ENCODE measurements at regions of chr10 and their contacts with region 1.

Region 1: GRCh38 chr10:71708301-71708703 is 11.3 kb downstream of the C10orf105 start:
- DNase-seq: peak in 1 of 2 donors; percentile 50
- H3K4me3 ChIP-seq: no peak overlapping the region
- H3K27ac ChIP-seq: no peak overlapping the region
- H3K4me1 ChIP-seq: peaks cover 0 to 9% of the 10 kb centered on the region in 2 donors
- H3K27me3 ChIP-seq: no peaks in the 10 kb centered on the region
- CTCF ChIP-seq: peak; percentile 60 to 81 (median 74)
- POLR2A ChIP-seq: no peak

Region 2: GRCh38 chr10:71319042-71319799 is 389.1 kb before region 1 on chr10 and contains the start of gene SLC29A3:
- intact Hi-C with region 1: no loop called
- DNase-seq: peak; percentile 80 to 83
- H3K4me3 ChIP-seq: peak within 1 kb of the TSS; percentile 74 to 80
- H3K27ac ChIP-seq: peak within 1 kb of the TSS; percentile 88 to 92
- H3K4me1 ChIP-seq: no peaks in the 10 kb centered on the region
- H3K27me3 ChIP-seq: no peaks in the 10 kb centered on the region
- CTCF ChIP-seq: peak; percentile 64 to 72 (median 70)
- POLR2A ChIP-seq: peak; percentile 63 to 85
- total RNA-seq, gene SLC29A3: 1.0 to 13.8 (median 5.5) TPM

Region 3: DNA sequence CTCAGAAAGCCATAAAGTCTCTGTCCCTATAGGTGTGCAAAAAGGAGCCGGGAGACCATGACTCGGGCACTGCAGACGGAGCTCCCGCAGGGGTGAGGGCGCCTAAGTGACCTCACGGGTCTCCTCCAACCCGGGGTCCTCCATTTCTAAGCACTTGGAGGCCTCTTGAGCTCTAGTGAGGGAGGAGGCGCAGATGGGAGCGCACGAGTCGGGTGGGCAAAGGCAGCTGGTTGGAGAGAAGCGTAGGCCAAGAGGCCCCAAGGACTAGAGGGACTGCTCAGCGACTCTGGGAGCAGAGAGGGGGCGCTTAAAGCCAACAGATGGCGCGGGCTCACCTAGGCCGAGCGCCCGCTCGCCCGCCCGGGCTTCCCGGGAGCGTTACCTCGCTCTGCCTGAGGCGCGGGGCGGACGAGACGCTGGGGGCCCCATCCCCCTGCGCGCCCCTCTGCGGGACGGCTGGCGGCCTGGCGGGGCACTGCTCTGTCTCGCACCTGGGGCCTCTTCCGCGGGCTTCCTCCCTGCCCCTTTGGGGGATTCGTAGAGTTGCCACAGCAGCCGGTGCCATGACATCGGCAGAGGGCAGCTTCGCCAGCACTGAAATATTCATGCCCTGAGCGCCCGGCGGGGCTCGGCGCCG is 312.1 kb before region 1 on chr10:
- intact Hi-C with region 1: loop called (anchors 10 kb)
- DNase-seq: peak; percentile 64 to 74
- H3K4me3 ChIP-seq: peak overlapping the region; percentile 37 to 66
- H3K27ac ChIP-seq: peak overlapping the region; percentile 75 to 91
- H3K4me1 ChIP-seq: peaks cover 0 to 8% of the 10 kb centered on the region in 2 donors
- H3K27me3 ChIP-seq: peaks cover 0 to 3% of the 10 kb centered on the region in 2 donors
- CTCF ChIP-seq: peak; percentile 65 to 81 (median 72)
- POLR2A ChIP-seq: no peak

Region 4: DNA sequence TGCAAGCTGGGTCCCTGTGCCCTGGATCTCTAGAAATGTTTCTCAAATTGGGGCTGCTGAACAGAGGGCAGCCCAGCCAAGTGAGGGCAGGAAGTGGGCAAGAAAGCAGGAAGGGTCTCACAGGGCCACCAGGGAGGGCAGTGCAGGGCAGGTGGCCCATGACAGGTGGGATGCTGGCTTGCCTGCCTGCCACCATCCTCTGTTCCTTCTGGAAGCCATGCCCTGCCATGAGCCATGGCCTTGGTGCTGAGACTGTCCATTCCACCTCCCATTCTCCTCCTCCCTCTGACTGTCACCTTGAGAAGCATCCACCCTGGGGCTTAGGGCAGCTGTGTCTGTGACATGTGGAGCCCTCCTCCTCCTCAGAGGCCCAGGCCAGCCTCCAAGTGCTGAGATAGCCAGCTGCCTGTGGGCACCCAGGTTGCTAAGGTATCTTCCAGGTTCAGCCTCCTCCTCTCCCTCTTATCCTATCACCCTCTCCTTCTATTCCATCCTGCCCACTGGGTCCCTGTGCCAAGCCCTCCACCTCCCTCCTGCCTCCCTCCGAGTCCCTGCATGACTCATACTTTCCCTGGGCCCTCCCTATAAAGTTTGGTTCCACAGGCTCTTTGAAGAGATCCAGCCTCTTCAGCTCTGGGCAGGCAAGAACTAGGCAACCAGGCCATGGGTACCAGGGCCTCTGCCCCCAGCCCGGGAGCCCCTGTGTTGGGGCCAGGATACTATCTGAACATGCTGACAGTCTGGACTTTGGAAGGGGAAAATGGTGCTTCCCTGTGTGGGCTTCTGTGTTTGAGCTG is 63.7 kb after region 1 on chr10:
- intact Hi-C with region 1: loop called (anchors 5 kb)
- DNase-seq: peak; percentile 84 to 92
- H3K4me3 ChIP-seq: peak overlapping the region; percentile 66 to 81
- H3K27ac ChIP-seq: peak overlapping the region; percentile 94 to 97
- H3K4me1 ChIP-seq: peaks cover 21 to 34% of the 10 kb centered on the region in 2 donors
- H3K27me3 ChIP-seq: no peaks in the 10 kb centered on the region
- CTCF ChIP-seq: no peak
- POLR2A ChIP-seq: peak; percentile 61 to 64

Region 5: GRCh38 chr10:71812016-71812912 is 104.0 kb after region 1 on chr10:
- intact Hi-C with region 1: no loop called
- DNase-seq: peak; percentile 53 to 66
- H3K4me3 ChIP-seq: no peak overlapping the region
- H3K27ac ChIP-seq: no peak overlapping the region
- H3K4me1 ChIP-seq: no peaks in the 10 kb centered on the region
- H3K27me3 ChIP-seq: no peaks in the 10 kb centered on the region
- CTCF ChIP-seq: peak; percentile 68 to 84 (median 82)
- POLR2A ChIP-seq: no peak

Region 6: DNA sequence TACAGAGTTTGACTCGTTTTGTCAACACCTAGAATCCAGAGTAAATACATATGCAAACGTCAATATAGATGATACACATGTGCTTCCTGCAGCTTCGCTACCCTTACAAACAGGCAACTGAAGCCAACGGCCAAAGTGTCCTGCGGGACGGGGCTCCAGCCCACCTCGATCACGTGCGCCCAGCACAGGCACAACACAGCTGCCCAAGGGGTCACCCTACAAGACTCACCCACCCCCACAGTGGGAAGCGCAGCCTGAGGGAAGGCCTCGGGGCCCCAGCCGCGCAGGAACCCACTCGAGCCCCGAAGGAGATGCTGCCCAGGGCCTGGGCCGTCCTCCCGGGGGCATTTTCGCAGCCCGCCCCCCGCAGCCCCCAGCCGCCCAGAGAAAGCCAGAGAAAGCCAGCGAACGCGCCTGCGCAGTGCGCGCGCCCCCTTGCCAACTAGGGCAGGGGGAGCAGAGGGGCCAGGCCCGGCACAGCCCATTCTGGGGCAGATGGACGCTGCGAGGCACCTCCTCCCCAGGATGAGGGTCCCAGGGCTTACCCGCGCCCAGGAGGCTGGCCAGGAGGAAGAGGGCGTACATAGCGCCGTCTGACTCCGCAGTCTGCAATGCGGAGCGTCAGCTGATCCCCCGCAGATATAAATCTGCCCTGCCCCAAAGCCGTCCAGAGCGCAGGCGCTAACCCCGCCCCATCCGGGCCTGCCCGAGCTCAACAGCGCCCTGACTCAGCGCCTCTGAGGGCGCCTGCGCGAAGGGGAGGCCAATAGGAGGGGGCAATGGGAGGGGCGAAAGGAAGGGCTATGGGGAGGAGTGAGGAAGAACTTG is 142.5 kb after region 1 on chr10 and contains the start of gene PSAP:
- intact Hi-C with region 1: no loop called
- DNase-seq: peak; percentile 99
- H3K4me3 ChIP-seq: peak within 1 kb of the TSS; percentile 65 to 88
- H3K27ac ChIP-seq: peak within 1 kb of the TSS; percentile 92 to 100
- H3K4me1 ChIP-seq: peaks cover 0 to 5% of the 10 kb centered on the region in 2 donors
- H3K27me3 ChIP-seq: no peaks in the 10 kb centered on the region
- CTCF ChIP-seq: peak in 2 of 4 experiments; percentile 6 to 15
- POLR2A ChIP-seq: peak; percentile 97 to 99
- total RNA-seq, gene PSAP: 603 to 903 (median 759) TPM

Region 7: DNA sequence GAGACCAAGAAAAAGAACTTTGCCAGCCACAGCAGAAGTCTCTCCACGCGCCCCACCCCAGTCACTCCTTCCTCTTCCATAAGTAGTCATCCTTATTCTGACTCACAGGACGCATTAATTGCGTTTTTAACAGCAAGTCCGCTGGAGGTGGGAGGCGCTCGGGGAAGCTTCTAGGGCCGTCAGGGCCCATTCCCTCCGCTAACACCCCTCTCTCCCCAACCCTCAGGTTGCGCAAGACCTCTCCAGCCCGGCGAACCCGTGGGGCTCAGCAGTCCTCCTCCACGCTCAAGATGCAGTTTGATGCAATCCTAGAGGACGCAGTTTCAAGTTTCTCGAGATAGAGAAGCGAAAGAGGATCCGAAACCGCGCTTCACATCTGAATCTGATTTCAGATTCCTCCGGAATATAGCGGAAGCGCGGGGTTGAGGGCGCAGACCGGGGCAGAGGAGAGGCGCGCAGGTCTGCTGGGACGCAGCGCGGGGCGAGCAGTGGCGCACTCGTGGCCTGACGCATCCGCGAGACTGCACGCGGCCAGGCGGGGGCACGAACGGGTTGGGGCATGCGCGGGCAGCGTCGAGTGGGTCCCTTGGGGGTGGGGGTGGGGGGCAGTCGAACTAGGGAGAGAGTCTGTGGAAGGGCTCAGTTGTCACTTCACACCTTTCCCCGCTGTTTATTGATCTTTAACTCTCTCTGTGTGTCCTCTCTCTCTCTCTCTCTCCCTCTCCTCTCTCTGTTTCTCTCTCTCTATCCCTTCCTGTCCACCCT is 180.5 kb after region 1 on chr10:
- intact Hi-C with region 1: no loop called
- DNase-seq: peak; percentile 91 to 93
- H3K4me3 ChIP-seq: peak overlapping the region; percentile 39 to 41
- H3K27ac ChIP-seq: peak overlapping the region; percentile 93 to 96
- H3K4me1 ChIP-seq: peaks cover 3 to 4% of the 10 kb centered on the region in 2 donors
- H3K27me3 ChIP-seq: no peaks in the 10 kb centered on the region
- CTCF ChIP-seq: peak in 1 of 4 experiments; percentile 20
- POLR2A ChIP-seq: peak; percentile 52 to 72